ENCODE measurements at regions of chr16 and their contacts with region 1.

Region 1: DNA sequence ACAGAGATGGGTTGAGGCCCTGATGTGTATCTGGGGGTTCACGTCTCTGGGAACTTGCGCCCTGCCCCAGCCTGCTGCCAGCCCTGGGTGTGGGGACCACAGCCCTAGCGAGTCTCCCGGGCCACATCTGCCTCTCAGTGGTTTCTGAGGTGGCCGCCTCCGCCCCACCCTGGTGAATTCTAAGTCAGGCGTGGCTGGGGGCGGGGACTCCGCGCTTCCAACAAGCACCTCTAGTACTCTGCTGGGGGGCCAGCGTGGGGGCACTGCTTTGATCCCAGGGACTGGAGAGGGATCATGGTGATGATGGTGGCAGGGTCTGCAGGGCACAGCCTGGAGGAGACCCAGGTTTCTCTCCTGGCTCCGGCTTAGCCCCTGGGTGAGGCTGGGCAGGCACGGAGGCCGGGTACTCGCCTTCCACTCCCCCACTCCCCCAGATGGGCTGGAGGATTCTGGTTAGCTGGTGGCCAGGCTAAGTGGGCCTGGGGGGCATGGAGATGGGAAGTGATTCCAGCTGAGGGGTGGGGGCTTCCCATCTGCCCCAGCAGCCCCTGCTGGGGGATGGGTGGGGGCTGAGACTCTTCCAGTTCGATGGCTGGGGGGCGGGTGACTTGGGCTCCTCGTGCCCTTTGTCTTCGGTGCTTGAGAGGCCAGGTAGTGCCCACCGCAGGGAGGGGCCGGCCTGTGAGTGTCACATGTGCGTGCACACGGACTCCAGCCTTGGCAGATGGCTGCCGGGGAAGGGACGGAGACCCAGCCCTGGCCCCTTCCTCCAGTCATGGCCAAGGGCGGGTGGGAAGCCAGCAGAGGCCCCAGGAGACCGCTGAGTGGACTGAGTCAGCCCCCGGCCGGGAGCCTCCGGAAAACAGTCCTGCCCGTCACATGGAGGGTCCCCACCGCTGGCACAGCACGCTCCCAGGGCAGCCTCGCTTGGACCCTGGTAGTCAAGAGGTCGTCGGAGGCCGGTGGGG is 3.9 kb downstream of the GLIS2 start:
- DNase-seq: peak in 1 of 2 donors; percentile 63
- ATAC-seq: peak in 1 of 8 donors; percentile 11
- H3K4me3 ChIP-seq: peak overlapping the region in 7 of 10 donors; percentile 1 to 82 (median 11)
- H3K27ac ChIP-seq: peak overlapping the region in 9 of 10 donors; percentile 48 to 98 (median 87)
- H3K4me1 ChIP-seq: peaks cover 64 to 88% (median 75%) of the 10 kb centered on the region in 9 donors
- H3K27me3 ChIP-seq: peaks cover 0 to 25% (median 0%) of the 10 kb centered on the region in 7 donors
- CTCF ChIP-seq: no peak

Region 2: DNA sequence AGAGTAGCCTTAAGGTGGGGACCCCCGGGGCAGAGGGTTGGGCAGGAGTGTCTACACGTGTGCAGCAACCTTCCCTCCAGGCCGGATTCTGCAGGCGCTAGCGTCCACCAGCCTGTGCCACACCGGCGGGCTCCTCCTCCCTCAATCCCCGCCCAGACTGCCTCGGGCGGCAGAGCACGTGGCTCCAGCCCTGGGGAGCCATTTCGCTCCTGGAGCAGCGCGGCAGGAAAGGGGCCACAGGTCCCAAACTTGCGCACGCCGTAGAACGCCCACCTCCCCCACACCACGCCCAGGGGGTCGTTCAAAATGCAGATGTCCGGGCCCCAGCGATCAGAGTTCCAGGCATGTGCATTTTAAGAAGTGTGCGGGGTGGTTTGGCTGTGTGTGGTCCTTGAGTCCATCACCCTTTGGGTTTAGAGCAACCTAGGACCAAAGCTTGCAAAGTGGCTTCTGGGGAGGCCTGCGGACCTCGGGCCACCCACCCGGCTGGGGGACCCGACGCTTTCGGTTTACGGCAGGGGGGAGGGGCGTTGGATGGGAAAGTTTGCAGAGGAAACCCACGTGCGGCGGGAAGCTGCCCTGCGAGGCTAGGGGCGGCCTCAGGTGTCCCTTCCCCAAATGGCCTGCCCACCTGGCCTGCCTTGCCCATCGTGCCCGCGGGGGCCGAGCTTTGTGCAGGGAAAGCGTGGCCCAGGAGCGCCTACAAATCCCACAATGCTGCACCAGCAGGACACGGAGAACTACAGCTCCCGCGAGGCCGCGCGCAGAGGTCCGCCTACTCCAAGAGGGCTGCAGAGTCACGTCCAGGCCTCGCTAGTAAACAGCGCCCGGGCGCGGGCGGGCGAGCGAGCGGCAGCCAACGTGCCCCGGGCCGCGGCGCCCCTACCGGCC is 48.3 kb before region 1 on chr16:
- intact Hi-C with region 1: loop called in 1 of 10 experiments (anchors 5 kb)
- DNase-seq: peak; percentile 92 to 93
- ATAC-seq: peak; percentile 83 to 90 (median 89)
- H3K4me3 ChIP-seq: peak overlapping the region; percentile 71 to 96 (median 86)
- H3K27ac ChIP-seq: peak overlapping the region; percentile 72 to 97 (median 91)
- H3K4me1 ChIP-seq: peaks cover 0 to 29% (median 17%) of the 10 kb centered on the region in 9 donors
- H3K27me3 ChIP-seq: no peaks in the 10 kb centered on the region
- CTCF ChIP-seq: peak in 2 of 9 donors; percentile 17 to 48

Region 3: DNA sequence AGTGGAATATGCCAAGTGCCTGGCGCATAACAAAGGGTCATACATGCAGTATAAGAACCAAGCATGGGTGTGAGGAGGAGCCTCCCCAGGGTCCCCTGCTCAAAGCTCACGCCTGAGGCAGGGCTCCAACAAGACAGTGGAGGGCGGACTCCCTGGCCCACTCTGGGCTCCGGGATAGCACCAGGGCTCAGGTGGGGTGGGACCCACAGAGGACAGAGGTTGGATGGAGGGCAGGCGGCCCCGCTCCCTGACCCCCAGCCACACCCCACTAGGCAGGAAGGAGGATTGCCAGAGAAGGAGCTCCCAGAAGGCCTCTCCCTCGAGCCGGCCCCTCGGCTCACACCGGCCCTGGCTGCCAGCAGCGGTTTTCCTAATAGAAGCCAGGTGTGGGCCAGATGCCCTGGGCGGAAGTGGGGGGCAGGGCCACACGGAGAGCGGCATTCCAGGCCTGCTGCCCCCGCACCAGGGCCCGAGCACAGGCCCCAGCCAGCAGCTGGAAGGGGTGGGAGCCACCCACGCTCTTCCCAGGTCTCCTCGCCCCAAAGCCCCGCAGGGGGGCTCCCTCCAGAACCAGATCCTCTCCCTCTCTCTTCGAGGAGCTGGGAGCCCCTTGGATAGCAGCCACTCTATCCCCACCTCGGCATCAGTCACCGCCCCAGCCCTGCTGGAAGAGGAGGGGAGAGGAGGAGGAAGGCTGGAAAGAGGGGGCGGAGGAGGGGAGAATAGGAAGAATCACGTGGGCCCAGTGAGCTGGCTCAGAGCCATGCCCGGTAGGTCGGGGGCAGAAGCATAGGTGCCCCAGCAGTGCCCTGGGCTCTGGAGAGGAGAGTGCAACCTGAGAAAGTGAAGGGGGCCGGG is 72.9 kb after region 1 on chr16:
- intact Hi-C with region 1: no loop called
- DNase-seq: no peak
- ATAC-seq: peak in 7 of 8 donors; percentile 6 to 57 (median 29)
- H3K4me3 ChIP-seq: no peak overlapping the region
- H3K27ac ChIP-seq: peak overlapping the region in 8 of 10 donors; percentile 3 to 69 (median 56)
- H3K4me1 ChIP-seq: peaks cover 0 to 52% (median 29%) of the 10 kb centered on the region in 9 donors
- H3K27me3 ChIP-seq: no peaks in the 10 kb centered on the region
- CTCF ChIP-seq: no peak

Measured in heart right ventricle (tissue), 16 donors.